ENCODE measurements at regions of chr4 and their contacts with region 1.

Region 1: DNA sequence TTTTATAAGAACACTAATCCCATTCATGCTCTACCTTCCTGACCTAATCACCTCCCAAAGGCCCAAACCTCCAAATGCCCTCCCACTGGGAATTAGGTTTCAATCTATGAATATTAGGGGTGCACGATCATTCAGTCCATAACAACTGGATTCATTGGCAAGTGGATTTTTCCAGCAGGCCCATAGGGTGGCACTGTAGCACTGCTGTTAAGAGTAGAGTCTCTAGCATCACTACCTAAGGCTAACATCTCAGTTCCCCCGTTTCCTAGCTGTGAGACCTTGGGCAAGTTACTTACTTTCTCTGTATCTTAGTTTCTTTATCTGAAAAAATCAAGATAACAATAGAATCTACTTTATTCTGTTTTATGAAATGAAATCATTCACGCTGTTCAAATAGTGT is 315.8 kb downstream of the STIM2 start:
- DNase-seq: peak; percentile 53
- H3K4me3 Mint-ChIP-seq: no peak overlapping the region
- H3K27ac Mint-ChIP-seq: no peak overlapping the region
- H3K4me1 Mint-ChIP-seq: peaks cover 15% of the 10 kb centered on the region
- H3K27me3 Mint-ChIP-seq: no peaks in the 10 kb centered on the region
- CTCF ChIP-seq: no peak

Region 2: DNA sequence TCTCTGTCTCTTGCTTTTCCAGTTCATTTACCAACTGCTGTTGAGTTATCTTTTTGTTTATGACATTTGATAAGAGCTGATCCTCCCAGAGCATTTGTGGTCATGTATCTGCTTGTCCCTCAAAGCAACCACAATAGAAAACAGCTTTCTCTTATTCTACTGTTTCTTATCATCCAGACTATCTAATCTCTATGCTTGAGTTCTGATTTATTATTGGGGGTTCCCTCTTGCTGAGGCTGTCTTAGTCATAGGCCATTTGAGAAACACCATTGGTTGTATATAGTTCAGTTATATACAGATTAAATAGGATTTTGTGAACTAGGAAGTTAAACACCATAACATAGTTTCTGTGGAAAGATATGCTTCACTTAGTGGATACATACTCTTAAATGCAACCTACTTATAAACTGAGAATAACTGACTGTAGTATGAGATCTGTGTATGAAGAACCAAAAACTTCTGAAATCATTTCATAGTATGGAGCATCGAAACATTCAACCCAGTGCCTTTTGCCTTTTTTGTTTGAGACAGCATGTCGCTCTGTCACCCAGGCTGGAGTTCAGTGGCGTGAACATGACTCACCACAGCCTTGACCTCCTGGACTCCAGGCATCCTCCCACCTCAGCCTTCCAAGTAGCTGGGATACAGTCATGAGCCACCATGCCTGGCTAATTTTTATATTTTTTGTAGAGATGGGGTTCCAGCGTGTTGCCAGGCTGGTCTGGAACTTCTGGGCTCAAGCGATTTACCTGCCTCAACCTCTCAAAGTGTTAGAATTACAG is 239.9 kb before region 1 on chr4:
- CTCF ChIA-PET with region 1: no interaction called
- intact Hi-C with region 1: no loop called
- DNase-seq: peak; percentile 4
- H3K4me3 Mint-ChIP-seq: no peak overlapping the region
- H3K27ac Mint-ChIP-seq: no peak overlapping the region
- H3K4me1 Mint-ChIP-seq: no peaks in the 10 kb centered on the region
- H3K27me3 Mint-ChIP-seq: no peaks in the 10 kb centered on the region
- CTCF ChIP-seq: no peak

Region 3: GRCh38 chr4:27239641-27240040 is 63.2 kb after region 1 on chr4:
- CTCF ChIA-PET with region 1: no interaction called
- intact Hi-C with region 1: no loop called
- DNase-seq: no peak
- H3K4me3 Mint-ChIP-seq: no peak overlapping the region
- H3K27ac Mint-ChIP-seq: no peak overlapping the region
- H3K4me1 Mint-ChIP-seq: no peaks in the 10 kb centered on the region
- H3K27me3 Mint-ChIP-seq: no peaks in the 10 kb centered on the region
- CTCF ChIP-seq: no peak

Region 4: DNA sequence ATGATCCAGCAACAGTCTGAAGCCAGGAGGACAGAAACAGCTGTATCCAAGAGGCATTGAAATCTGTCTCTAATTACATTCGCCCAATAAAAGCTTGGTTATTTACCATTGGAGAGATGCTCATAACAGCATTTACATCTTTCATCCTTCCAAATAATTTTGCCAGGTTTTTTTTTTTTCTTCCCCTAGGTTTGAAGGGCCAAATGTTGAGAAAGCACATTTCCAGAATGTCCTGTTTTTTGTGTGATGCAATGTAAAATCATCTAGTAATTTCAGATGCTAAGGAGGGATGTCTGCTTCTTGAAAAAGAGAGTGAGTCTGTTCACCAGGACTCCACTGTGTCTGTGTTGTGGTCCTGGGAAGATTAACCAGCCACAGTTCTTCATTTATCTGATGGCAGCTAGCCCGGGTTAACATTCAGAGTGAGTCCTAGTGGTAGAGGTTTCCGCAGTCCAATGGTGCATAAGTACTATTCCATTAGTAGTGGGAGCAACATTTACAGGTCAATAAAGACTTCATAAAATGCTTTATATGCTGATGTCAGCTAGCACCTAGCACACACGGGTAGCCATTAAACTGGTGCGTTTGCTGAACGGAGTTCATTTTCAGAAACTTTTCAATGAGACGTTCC is 91.1 kb after region 1 on chr4:
- CTCF ChIA-PET with region 1: no interaction called
- intact Hi-C with region 1: no loop called
- DNase-seq: no peak
- H3K4me3 Mint-ChIP-seq: no peak overlapping the region
- H3K27ac Mint-ChIP-seq: no peak overlapping the region
- H3K4me1 Mint-ChIP-seq: peaks cover 15% of the 10 kb centered on the region
- H3K27me3 Mint-ChIP-seq: no peaks in the 10 kb centered on the region
- CTCF ChIP-seq: no peak

Region 5: DNA sequence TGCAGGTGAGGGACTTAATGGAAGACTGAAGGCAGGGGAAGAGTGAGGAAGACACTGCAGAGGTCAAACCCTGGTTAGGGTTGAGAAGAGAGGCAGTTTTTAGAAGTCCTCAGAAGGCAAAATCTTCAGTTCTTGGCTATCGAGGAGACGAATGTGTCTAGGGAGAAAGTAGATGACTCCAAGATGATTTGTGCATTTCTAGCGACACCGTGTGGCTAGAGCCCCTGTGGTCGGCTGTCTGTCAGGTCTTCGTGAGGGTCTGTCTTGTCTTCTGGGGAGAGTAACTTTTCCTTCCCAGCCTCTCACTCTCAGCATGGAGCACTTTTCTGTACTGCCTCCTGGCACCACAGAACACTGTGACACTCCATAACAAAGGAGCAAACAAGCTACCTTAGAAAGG is 142.3 kb after region 1 on chr4:
- CTCF ChIA-PET with region 1: interaction called, 11 read pairs
- intact Hi-C with region 1: loop called (anchors 1 kb)
- DNase-seq: peak; percentile 55
- H3K4me3 Mint-ChIP-seq: no peak overlapping the region
- H3K27ac Mint-ChIP-seq: peak overlapping the region; percentile 44
- H3K4me1 Mint-ChIP-seq: peaks cover 24% of the 10 kb centered on the region
- H3K27me3 Mint-ChIP-seq: no peaks in the 10 kb centered on the region
- CTCF ChIP-seq: no peak

Measured in Calu3 (cell line).